Tibial artery (tissue), 4 donors: ENCODE measurements at regions of chr7 and their contacts with region 1.

Region 1: GRCh38 chr7:121262221-121262620 is 66.6 kb upstream of the WNT16 start:
- DNase-seq: no peak
- H3K4me3 ChIP-seq: no peak overlapping the region
- H3K27ac ChIP-seq: no peak overlapping the region
- H3K4me1 ChIP-seq: no peaks in the 10 kb centered on the region
- H3K27me3 ChIP-seq: no peaks in the 10 kb centered on the region
- CTCF ChIP-seq: no peak

Region 2: DNA sequence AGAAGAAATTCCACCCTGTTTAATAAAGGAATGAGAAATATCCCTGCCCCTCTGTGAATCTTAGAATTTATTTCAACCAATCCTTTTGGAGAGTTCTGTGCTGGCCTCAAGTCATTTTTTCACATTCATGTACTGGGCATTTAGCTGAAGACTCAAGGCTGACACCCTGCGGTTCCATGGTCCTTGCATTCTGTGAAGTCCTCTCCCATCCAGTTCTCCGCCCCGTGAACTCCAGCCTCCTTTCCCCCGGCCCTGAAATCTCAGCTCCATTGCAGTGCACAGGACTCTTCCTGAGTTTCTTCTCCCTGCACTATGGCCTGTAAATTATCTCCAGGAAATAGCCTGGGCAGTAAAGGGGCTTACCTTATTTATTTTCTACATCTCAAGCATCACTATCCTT is 1172.3 kb before region 1 on chr7:
- intact Hi-C with region 1: no loop called
- DNase-seq: no peak
- H3K4me3 ChIP-seq: no peak overlapping the region
- H3K27ac ChIP-seq: no peak overlapping the region
- H3K4me1 ChIP-seq: no peaks in the 10 kb centered on the region
- H3K27me3 ChIP-seq: no peaks in the 10 kb centered on the region
- CTCF ChIP-seq: no peak

Region 3: DNA sequence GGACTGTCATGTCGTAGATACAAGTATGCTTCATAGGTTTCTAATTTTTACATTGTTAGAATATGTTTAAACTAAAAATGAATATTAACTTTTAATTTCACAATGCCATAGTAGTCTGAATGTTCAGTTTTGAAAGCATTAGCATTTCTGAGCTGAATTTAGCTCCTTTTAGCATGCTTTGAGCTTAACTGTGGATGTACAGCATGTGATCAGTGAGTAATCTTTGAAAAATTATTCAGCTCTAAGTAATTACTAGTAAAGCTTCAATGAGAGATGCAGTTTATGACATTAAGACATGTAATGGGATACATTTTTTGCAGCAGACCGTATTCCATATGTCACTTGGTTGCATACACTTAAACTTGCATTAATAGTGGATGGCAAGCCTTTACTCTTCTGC is 47.6 kb before region 1 on chr7:
- intact Hi-C with region 1: loop called (anchors 2 kb)
- DNase-seq: no peak
- H3K4me3 ChIP-seq: no peak overlapping the region
- H3K27ac ChIP-seq: no peak overlapping the region
- H3K4me1 ChIP-seq: peaks cover 0 to 24% (median 4%) of the 10 kb centered on the region in 4 donors
- H3K27me3 ChIP-seq: no peaks in the 10 kb centered on the region
- CTCF ChIP-seq: no peak